T-cell (primary cell): ENCODE measurements at regions of chr19 and their contacts with region 1.

Region 1: DNA sequence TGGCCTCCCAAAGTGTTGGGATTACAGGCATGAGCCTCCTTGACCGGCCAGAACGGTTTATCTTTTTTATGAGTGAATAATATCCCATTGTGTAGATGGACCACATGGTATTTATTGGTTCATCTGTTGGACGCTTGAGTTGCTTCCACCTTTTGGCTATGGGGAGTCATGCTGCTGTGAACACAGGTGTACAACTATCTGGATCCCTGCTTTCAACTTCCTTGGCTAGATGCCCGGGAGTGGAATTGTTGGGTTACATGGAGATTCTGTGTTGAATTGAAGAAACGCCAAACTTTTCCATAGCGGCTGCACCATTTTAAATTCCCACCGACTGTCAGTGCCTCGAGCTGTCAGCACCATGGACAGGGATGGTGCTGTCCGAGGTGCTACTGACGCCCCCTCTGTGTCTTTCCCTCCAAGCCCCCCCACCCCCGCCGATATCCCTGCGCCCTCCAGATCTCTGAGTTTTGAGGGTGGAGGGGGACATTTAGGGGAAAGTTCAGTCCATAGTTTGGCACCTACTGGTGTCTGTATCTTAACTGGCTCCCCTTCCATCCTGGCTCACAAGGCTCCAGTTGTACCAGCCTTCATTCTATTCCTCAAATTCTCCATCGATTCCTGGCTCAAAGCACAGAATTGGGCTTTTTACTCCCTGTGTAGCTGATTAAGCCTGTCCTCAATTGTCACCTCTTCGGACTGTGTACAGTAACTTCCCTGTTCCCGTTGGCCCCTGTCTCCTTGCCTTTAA is 27.3 kb downstream of the PNPLA6 start:
- DNase-seq: peak in 2 of 35 experiments; percentile 10 to 28
- ATAC-seq: no peak
- H3K4me3 ChIP-seq: no peak overlapping the region
- H3K4me3 Mint-ChIP-seq: no peak overlapping the region
- H3K27ac ChIP-seq: no peak overlapping the region
- H3K27ac Mint-ChIP-seq: no peak overlapping the region
- H3K4me1 ChIP-seq: no peaks in the 10 kb centered on the region
- H3K4me1 Mint-ChIP-seq: no peaks in the 10 kb centered on the region
- H3K27me3 ChIP-seq: peaks cover 0 to 3% of the 10 kb centered on the region in 2 experiments
- H3K27me3 Mint-ChIP-seq: no peaks in the 10 kb centered on the region

Region 2: GRCh38 chr19:7434391-7434790 is 128.4 kb before region 1 on chr19:
- CTCF ChIA-PET with region 1: no interaction called
- POLR2A ChIA-PET with region 1: no interaction called
- DNase-seq: no peak
- ATAC-seq: no peak
- H3K4me3 ChIP-seq: no peak overlapping the region
- H3K4me3 Mint-ChIP-seq: no peak overlapping the region
- H3K27ac ChIP-seq: no peak overlapping the region
- H3K27ac Mint-ChIP-seq: no peak overlapping the region
- H3K4me1 ChIP-seq: peaks cover 0 to under 1% of the 10 kb centered on the region in 2 experiments
- H3K4me1 Mint-ChIP-seq: peaks cover 3 to 7% (median 3%) of the 10 kb centered on the region in 3 donors
- H3K27me3 ChIP-seq: no peaks in the 10 kb centered on the region
- H3K27me3 Mint-ChIP-seq: no peaks in the 10 kb centered on the region

Region 3: DNA sequence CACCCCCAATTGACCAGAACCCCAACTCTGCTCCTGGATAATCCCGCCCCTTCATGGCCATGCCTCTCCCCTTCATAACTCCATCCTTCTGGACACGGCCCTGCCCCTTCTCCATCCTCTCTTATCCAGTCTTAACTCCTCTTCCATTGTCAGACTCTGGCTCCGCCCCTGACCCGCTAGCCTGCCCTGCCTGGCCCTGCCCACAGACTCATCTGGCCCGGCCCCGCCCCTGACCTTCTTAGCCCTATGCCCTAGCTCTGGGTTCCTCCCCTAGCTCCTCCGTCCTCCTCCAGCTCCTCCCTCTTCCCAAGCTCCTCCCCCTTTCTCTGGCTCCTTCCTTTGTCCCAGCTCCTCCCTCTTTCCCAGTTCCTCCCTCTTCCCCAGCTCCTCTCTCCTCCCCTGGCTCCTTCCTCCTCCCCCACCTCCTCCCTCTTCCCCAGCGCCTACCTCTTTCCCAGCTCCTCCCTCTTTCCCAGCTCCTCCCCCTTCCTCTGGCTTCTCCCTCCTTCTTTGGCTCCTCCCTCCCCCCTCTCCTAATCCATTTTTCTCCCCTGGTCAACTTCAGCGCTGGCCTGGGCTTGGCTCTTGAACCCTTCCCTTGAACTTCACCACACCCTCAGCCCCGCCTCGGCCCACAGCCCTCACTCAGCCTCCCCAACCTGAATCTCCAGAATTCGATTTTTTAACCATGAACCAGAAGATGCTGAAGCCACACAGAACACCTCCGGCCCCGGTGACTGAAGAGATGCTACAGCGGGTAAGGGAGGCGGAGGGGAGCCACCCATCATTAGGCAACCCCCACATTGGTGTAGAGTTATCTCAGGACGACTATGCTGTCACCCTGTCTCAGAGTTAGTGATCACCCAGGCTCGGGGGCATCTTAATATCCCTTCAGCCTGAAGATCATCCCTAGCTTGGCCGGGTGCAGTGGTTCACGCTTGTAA is 56.2 kb before region 1 on chr19:
- CTCF ChIA-PET with region 1: no interaction called
- POLR2A ChIA-PET with region 1: no interaction called
- DNase-seq: peak in 16 of 35 experiments; percentile 24 to 51 (median 42)
- ATAC-seq: peak; percentile 35 to 58 (median 56)
- H3K4me3 ChIP-seq: no peak overlapping the region
- H3K4me3 Mint-ChIP-seq: peak overlapping the region in 1 of 3 donors; percentile 25
- H3K27ac ChIP-seq: no peak overlapping the region
- H3K27ac Mint-ChIP-seq: no peak overlapping the region
- H3K4me1 ChIP-seq: peaks cover 0 to 19% of the 10 kb centered on the region in 2 experiments
- H3K4me1 Mint-ChIP-seq: peaks cover 9 to 12% (median 10%) of the 10 kb centered on the region in 3 donors
- H3K27me3 ChIP-seq: peaks cover 2 to 72% of the 10 kb centered on the region in 2 experiments
- H3K27me3 Mint-ChIP-seq: peaks cover 19 to 34% of the 10 kb centered on the region in 2 donors

Region 4: GRCh38 chr19:7629347-7630054 is 66.7 kb after region 1 on chr19 and contains the starts of genes PET100 and XAB2:
- CTCF ChIA-PET with region 1: interaction called in 1 of 2 experiments, 12 read pairs
- POLR2A ChIA-PET with region 1: no interaction called
- DNase-seq: peak; percentile 87 to 98 (median 94)
- ATAC-seq: peak; percentile 92 to 98 (median 96)
- H3K4me3 ChIP-seq: peak within 1 kb of the TSS; percentile 90 to 99
- H3K4me3 Mint-ChIP-seq: peak within 1 kb of the TSS; percentile 90 to 99 (median 96)
- H3K27ac ChIP-seq: peak within 1 kb of the TSS; percentile 86
- H3K27ac Mint-ChIP-seq: peak within 1 kb of the TSS; percentile 98
- H3K4me1 ChIP-seq: peaks cover 13 to 45% of the 10 kb centered on the region in 2 experiments
- H3K4me1 Mint-ChIP-seq: peaks cover 39 to 48% (median 45%) of the 10 kb centered on the region in 3 donors
- H3K27me3 ChIP-seq: no peaks in the 10 kb centered on the region
- H3K27me3 Mint-ChIP-seq: no peaks in the 10 kb centered on the region
- total RNA-seq, gene PET100: 105 to 139 (median 110) TPM
- total RNA-seq, gene XAB2: 59.9 to 82.6 (median 78.1) TPM

Region 5: DNA sequence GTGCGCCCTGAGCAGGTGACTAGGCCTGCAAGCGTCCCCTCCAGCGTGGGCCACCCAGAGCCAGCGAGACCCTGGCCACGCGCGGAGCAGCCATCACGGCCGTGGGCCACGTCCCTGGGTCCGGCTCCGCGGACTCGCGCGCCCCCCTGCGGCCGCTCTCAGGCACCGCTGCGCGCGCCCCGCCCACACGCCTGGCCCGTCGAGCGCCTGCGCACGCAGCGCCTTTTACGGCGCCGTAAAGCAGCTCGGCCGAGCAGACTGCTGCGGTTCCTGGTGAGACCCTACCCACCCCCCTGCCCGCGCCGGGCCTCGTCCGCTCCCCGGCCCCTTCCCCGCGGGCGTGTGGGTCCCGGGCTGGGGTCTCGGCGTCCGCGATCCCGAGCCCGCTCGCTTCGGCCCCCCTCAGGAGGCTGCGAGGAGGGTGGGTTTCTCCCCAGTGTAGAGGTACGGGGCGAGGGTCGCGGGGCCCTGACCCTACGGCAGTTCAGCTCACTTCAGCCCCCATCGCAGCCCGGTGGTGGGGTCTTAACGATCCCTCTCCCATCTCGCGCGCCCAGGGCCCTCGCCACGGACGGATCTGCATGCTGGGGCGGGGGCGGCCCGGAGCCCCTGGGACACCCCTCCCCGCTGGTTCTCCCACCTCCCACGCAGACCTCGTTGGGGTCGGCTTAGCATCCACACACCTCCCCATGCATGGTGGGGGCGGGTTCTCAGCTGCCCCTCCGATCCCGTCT is 118.0 kb after region 1 on chr19 and contains the start of gene TRAPPC5:
- CTCF ChIA-PET with region 1: interaction called, 3 to 24 read pairs
- POLR2A ChIA-PET with region 1: no interaction called
- DNase-seq: peak; percentile 67 to 94 (median 80)
- ATAC-seq: peak; percentile 62 to 77 (median 74)
- H3K4me3 ChIP-seq: peak within 1 kb of the TSS; percentile 86 to 100
- H3K4me3 Mint-ChIP-seq: peak within 1 kb of the TSS; percentile 85 to 92 (median 87)
- H3K27ac ChIP-seq: peak within 1 kb of the TSS; percentile 78
- H3K27ac Mint-ChIP-seq: peak within 1 kb of the TSS; percentile 86 to 89
- H3K4me1 ChIP-seq: peaks cover 19 to 49% of the 10 kb centered on the region in 2 experiments
- H3K4me1 Mint-ChIP-seq: peaks cover 34 to 55% (median 43%) of the 10 kb centered on the region in 3 donors
- H3K27me3 ChIP-seq: peaks cover 0 to 30% of the 10 kb centered on the region in 2 experiments
- H3K27me3 Mint-ChIP-seq: peaks cover 14 to 28% of the 10 kb centered on the region in 2 donors
- total RNA-seq, gene TRAPPC5: 39.2 to 75.3 (median 69.4) TPM

Region 6: GRCh38 chr19:7799640-7800355 is 237.0 kb after region 1 on chr19:
- CTCF ChIA-PET with region 1: interaction called, 6 to 32 read pairs
- POLR2A ChIA-PET with region 1: no interaction called
- DNase-seq: peak in 24 of 35 experiments; percentile 15 to 77 (median 37)
- ATAC-seq: peak in 3 of 4 experiments; percentile 45 to 56 (median 46)
- H3K4me3 ChIP-seq: no peak overlapping the region
- H3K4me3 Mint-ChIP-seq: no peak overlapping the region
- H3K27ac ChIP-seq: no peak overlapping the region
- H3K27ac Mint-ChIP-seq: no peak overlapping the region
- H3K4me1 ChIP-seq: peaks cover 0 to 10% of the 10 kb centered on the region in 2 experiments
- H3K4me1 Mint-ChIP-seq: peaks cover 5 to 8% (median 5%) of the 10 kb centered on the region in 3 donors
- H3K27me3 ChIP-seq: peaks cover 12 to 25% of the 10 kb centered on the region in 2 experiments
- H3K27me3 Mint-ChIP-seq: peaks cover 13 to 28% of the 10 kb centered on the region in 2 donors